ENCODE measurements at regions of chr17 and their contacts with region 1.

Region 1: DNA sequence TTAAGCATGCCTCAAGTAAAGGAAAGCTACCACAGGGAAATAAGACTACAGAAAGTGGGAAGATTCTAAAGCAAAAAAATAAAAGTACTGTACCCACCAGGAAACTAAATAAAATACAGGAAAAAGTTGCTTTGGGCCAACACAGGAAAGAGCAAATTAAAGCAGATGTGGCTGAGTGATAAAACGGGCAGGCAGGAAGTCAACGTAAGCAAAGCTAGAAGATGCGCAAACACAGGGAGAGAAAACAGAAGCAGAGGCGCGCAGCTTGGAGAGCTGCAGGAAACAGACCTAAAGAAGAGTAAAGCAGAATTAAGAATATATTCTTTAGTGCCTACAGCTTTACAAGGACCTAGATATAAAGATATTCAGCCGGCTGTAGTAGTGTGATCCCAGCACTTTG is 21.7 kb downstream of the USP36 start:
- DNase-seq: peak in 7 of 9 donors; percentile 76 to 89 (median 86)
- ATAC-seq: peak; percentile 72
- H3K4me3 ChIP-seq: peak overlapping the region; percentile 37
- H3K4me3 Mint-ChIP-seq: peak overlapping the region; percentile 68 to 85 (median 78)
- H3K27ac ChIP-seq: peak overlapping the region; percentile 88
- H3K27ac Mint-ChIP-seq: peak overlapping the region; percentile 94 to 99 (median 96)
- H3K4me1 ChIP-seq: peaks cover 42 to 47% of the 10 kb centered on the region in 2 donors
- H3K4me1 Mint-ChIP-seq: peaks cover 36 to 76% (median 56%) of the 10 kb centered on the region in 7 donors
- H3K27me3 ChIP-seq: no peaks in the 10 kb centered on the region
- H3K27me3 Mint-ChIP-seq: no peaks in the 10 kb centered on the region

Region 2: DNA sequence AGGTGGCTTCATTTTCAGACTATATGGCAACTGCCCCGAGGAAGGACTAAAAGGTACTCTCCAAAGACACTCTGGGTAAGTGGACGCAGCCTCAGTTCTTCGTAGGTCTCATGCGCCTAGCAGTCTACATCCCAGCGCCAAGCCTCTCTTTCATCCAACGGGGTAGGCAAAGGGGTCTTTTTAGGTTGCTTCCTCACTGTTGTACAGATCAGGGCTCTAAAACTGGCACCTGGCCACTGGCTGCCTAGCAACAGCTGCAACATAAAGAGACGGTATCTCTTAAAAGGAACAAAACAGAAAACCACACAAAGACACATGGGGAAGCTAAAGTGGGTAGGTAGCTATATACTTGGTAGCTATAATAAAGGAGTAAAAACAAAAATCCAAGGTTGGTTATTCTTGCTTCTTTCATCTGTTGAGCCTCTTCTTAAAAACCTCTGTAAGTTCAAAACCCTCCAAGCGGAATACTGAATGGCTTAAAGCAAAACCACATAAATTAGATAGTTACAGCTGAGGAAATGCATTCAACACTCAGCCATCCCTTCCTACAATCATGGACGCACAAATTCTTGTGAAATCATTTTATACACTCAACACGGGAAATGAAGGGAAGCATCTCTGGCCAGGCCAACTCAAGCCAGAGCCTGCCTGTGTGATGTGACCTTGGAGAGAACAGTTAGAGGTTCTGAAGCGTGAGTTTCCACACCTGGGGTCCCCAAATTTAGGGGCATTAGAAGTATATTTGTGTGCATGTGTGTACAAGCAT is 59.5 kb before region 1 on chr17:
- CTCF ChIA-PET with region 1: no interaction called
- POLR2A ChIA-PET with region 1: interaction called, 6 read pairs
- intact Hi-C with region 1: loop called in 1 of 2 experiments (anchors 1 kb)
- DNase-seq: peak; percentile 56 to 96 (median 93)
- ATAC-seq: peak; percentile 91
- H3K4me3 ChIP-seq: peak overlapping the region; percentile 53
- H3K4me3 Mint-ChIP-seq: peak overlapping the region; percentile 64 to 85 (median 80)
- H3K27ac ChIP-seq: peak overlapping the region; percentile 93
- H3K27ac Mint-ChIP-seq: peak overlapping the region; percentile 83 to 98 (median 97)
- H3K4me1 ChIP-seq: peaks cover 75 to 77% of the 10 kb centered on the region in 2 donors
- H3K4me1 Mint-ChIP-seq: peaks cover 43 to 88% (median 83%) of the 10 kb centered on the region in 7 donors
- H3K27me3 ChIP-seq: no peaks in the 10 kb centered on the region
- H3K27me3 Mint-ChIP-seq: no peaks in the 10 kb centered on the region

Region 3: DNA sequence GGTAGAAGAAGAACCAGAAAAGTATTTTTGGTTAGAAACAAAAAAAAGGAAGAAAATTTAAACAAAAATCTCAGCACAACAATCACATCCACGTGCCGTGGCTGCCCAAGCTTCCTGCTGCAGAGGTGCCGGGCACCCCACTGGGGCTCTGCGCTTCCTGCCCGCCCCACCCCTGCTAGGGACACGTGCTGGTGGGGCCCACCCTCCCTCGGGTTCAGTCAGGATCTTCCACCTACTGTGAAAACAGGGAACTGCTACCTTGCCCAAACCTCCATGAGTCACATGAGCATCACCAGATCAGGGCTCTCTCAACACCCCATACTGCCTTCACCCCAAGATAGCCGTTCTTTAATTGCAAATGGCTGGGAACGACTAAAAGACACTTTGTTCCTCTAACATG is 12.5 kb before region 1 on chr17:
- CTCF ChIA-PET with region 1: interaction called, 4 read pairs
- POLR2A ChIA-PET with region 1: interaction called, 23 read pairs
- intact Hi-C with region 1: no loop called
- DNase-seq: peak in 6 of 9 donors; percentile 49 to 80 (median 74)
- ATAC-seq: peak; percentile 80
- H3K4me3 ChIP-seq: no peak overlapping the region
- H3K4me3 Mint-ChIP-seq: peak overlapping the region in 9 of 10 donors; percentile 2 to 76 (median 58)
- H3K27ac ChIP-seq: peak overlapping the region; percentile 41
- H3K27ac Mint-ChIP-seq: peak overlapping the region; percentile 81 to 97 (median 85)
- H3K4me1 ChIP-seq: peaks cover 26 to 43% of the 10 kb centered on the region in 2 donors
- H3K4me1 Mint-ChIP-seq: peaks cover 21 to 52% (median 43%) of the 10 kb centered on the region in 7 donors
- H3K27me3 ChIP-seq: no peaks in the 10 kb centered on the region
- H3K27me3 Mint-ChIP-seq: no peaks in the 10 kb centered on the region

Measured in naive thymus-derived CD4-positive, alpha-beta T cell (primary cell).